ENCODE measurements at regions of chr22 and their contacts with region 1.

Region 1: DNA sequence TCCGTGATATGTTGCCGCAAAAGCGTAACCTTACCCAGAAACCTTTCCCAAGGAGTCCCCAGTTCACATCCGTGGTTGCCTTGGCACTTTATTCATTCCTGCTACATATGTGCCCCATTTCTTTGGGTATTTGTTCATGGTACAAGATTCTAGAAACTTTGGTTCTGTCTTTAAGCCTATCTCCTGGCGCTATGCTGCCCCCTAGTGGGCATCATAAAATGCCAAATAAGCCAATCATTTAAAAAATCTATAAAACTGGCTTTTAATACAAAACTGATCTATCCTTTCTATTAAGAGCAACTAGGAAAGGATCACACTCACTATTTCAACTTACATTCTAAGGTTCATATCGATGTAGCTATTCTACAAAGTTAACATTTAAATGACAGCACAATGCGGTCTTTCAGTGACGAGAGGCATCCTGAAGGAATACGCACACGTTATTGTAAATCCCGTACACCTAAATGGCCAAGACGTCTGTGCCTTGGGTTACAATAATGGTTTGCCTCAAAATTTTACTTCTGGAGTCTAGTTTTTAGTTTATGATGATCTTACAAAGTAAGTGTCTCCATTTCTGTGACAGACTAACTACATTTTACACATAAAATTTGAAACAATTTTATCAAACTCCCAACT is 16.2 kb downstream of the PIWIL3 start:
- DNase-seq: peak; percentile 60
- ATAC-seq: peak; percentile 70
- H3K4me3 ChIP-seq: no peak overlapping the region
- H3K27ac ChIP-seq: no peak overlapping the region
- H3K4me1 ChIP-seq: peaks cover 2% of the 10 kb centered on the region; the same call in 1 of the 2 replicates
- H3K27me3 ChIP-seq: peaks cover 6% of the 10 kb centered on the region
- CTCF ChIP-seq: peak; percentile 93
- POLR2A ChIP-seq: peak; percentile 46; the same call in 1 of the 2 replicates
- RAD21 ChIP-seq: peak; percentile 94

Region 2: GRCh38 chr22:24834845-24835570 is 76.7 kb after region 1 on chr22:
- CTCF ChIA-PET with region 1: no interaction called
- POLR2A ChIA-PET with region 1: interaction called, 10 read pairs
- dilution Hi-C with region 1: no loop called
- in situ Hi-C with region 1: no loop called
- intact Hi-C with region 1: no loop called
- DNase-seq: peak; percentile 11
- ATAC-seq: no peak
- H3K4me3 ChIP-seq: no peak overlapping the region
- H3K27ac ChIP-seq: no peak overlapping the region
- H3K4me1 ChIP-seq: no peaks in the 10 kb centered on the region
- H3K27me3 ChIP-seq: peaks cover 13% of the 10 kb centered on the region
- CTCF ChIP-seq: no peak
- POLR2A ChIP-seq: no peak
- RAD21 ChIP-seq: no peak